GM12878 (cell line): ENCODE measurements at regions of chr6 and their contacts with region 1.

Region 1: GRCh38 chr6:129598244-129599187 is 111.5 kb downstream of the ARHGAP18 start:
- DNase-seq: peak; percentile 76
- ATAC-seq: peak; percentile 88
- H3K4me3 ChIP-seq: no peak overlapping the region
- H3K27ac ChIP-seq: peak overlapping the region; percentile 16
- H3K4me1 ChIP-seq: peaks cover 11% of the 10 kb centered on the region
- H3K27me3 ChIP-seq: no peaks in the 10 kb centered on the region
- CTCF ChIP-seq: peak; percentile 59 to 90 (median 78)
- EP300 ChIP-seq: no peak
- POLR2A ChIP-seq: no peak
- RAD21 ChIP-seq: peak; percentile 99

Region 2: DNA sequence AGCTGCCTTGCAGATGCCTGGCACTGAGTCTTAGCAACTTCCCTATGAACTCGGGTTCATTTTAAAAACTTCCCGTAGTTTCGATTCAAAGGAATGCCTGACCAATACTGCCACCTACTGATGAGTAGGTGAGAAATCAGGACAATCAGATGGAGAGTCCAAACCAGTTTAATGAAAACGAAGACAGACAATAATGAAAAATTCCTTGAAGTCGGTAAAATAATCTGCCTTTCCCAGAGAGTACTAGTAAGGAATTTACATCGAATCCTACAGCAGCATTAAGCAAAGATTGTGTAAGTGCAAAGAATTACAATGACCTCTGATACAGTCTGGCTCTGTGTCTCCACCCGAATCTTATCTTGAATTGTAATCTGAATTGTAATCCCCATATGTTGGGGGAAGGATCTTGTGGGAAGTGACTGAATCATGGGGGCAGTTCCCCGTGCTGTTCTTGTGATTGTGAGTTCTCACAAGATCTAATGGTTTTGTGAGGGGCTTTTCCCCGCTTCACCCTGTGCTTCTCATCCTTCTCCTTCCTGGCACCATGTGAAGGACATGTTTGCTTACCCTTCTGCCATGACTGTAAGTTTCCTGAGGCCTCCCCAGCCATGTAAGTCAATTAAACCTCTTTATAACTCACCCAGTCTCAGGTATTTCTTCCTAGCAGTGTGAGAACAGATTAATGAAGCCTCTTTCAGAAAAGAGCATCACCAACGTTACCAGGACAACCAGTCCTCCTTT is 23.0 kb before region 1 on chr6:
- CTCF ChIA-PET with region 1: interaction called, 9 read pairs
- POLR2A ChIA-PET with region 1: no interaction called
- RAD21 ChIA-PET with region 1: no interaction called
- SMC1A ChIA-PET with region 1: interaction called, 11 read pairs
- in situ Hi-C with region 1: no loop called
- intact Hi-C with region 1: no loop called
- DNase-seq: no peak
- ATAC-seq: no peak
- H3K4me3 ChIP-seq: no peak overlapping the region
- H3K27ac ChIP-seq: no peak overlapping the region
- H3K4me1 ChIP-seq: no peaks in the 10 kb centered on the region
- H3K27me3 ChIP-seq: no peaks in the 10 kb centered on the region
- CTCF ChIP-seq: peak in 2 of 3 experiments; percentile 11 to 33; a peak in 2 of 6 replicates
- EP300 ChIP-seq: no peak
- POLR2A ChIP-seq: no peak
- RAD21 ChIP-seq: peak; percentile 43; the same call in 1 of the 2 replicates

Region 3: GRCh38 chr6:129635396-129636130 is 37.0 kb after region 1 on chr6:
- CTCF ChIA-PET with region 1: interaction called, 12 read pairs
- POLR2A ChIA-PET with region 1: no interaction called
- RAD21 ChIA-PET with region 1: interaction called, 5 read pairs
- SMC1A ChIA-PET with region 1: interaction called, 8 read pairs
- in situ Hi-C with region 1: no loop called
- intact Hi-C with region 1: no loop called
- DNase-seq: no peak
- ATAC-seq: no peak
- H3K4me3 ChIP-seq: no peak overlapping the region
- H3K27ac ChIP-seq: no peak overlapping the region
- H3K4me1 ChIP-seq: peaks cover 16% of the 10 kb centered on the region; the same call in 1 of the 2 replicates
- H3K27me3 ChIP-seq: no peaks in the 10 kb centered on the region
- CTCF ChIP-seq: no peak
- EP300 ChIP-seq: no peak
- POLR2A ChIP-seq: no peak
- RAD21 ChIP-seq: no peak

Region 4: DNA sequence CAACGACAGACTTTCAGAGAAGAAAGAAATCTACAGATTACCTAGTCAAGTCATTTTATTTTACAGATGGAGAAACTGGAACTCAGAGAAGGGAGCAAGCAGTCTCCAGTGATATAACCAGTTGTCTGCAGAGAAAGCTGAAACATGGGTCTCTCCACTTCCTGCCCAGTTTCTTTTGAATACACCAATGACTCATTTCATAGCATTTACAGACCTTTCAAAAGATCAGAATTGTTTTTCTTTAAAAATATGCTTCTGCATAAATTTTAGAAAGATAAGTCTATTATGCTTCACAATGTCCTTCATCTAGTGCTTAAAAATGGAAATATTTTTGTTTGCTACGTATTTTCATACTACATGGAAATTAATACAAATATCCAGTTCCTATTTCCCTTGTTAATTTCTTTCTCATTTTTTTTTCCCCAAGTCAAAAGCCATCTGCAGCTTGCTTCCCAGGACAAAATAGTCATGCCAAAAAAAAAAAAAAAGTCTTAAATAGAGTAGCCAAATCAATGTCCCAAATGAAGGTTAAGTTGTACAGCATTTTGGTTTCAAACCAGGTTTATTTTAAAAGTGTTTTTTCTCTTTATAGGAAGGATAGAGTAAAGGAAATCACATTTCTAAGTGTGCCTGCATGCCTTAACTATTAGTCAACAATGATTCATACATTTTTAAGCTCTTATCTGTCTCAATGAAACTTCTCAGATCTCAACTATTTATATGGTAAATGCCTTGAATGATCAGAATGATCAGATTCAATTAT is 74.5 kb after region 1 on chr6:
- CTCF ChIA-PET with region 1: interaction called, 41 read pairs
- POLR2A ChIA-PET with region 1: interaction called, 4 read pairs
- RAD21 ChIA-PET with region 1: interaction called, 22 read pairs
- SMC1A ChIA-PET with region 1: interaction called, 21 read pairs
- in situ Hi-C with region 1: no loop called
- intact Hi-C with region 1: loop called (anchors 2 kb)
- DNase-seq: peak; percentile 60
- ATAC-seq: peak; percentile 82
- H3K4me3 ChIP-seq: peak overlapping the region; percentile 58; the same call in 1 of the 2 replicates
- H3K27ac ChIP-seq: peak overlapping the region; percentile 98
- H3K4me1 ChIP-seq: peaks cover 53% of the 10 kb centered on the region
- H3K27me3 ChIP-seq: no peaks in the 10 kb centered on the region
- CTCF ChIP-seq: no peak
- EP300 ChIP-seq: 0 out of 4 replicates have a peak, but pooled peaks of 1 of the 2 experiments have one; percentile 43
- POLR2A ChIP-seq: no peak
- RAD21 ChIP-seq: no peak

Region 5: DNA sequence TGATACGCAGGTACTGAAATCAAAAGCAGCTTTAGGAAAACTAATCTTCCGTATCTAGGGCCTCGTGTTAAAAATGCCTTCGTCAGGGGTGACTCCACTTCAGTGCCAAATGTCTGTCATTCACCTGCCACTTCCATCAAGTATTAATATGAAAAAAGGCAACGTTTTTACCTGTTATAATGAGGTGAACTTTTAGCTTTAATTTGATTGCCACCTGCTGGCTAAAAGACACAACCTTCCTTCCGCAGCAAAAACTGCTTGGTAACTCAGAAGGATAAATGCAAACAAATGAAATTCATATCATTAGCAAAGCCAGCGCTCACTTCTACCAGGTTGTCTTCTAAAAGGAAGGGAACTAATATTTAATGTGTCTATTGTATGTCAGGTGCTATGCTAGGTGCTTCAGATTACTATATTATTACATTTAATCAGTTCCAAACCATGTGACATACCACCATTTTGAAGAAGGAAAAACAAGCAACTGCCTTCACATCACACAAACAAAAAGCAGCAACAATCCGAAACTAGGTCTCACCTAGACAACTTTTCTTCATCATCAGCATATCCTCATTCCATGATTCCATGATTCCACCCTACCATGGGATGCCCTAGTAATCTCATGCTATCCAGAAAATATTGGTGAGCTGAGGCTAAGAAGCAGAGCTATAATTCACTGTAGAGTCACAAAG is 132.1 kb after region 1 on chr6:
- CTCF ChIA-PET with region 1: interaction called, 411 read pairs
- POLR2A ChIA-PET with region 1: interaction called, 10 read pairs
- RAD21 ChIA-PET with region 1: interaction called, 268 read pairs
- SMC1A ChIA-PET with region 1: interaction called, 407 read pairs
- in situ Hi-C with region 1: no loop called
- intact Hi-C with region 1: loop called (anchors 1 kb)
- DNase-seq: no peak
- ATAC-seq: peak; percentile 87
- H3K4me3 ChIP-seq: no peak overlapping the region
- H3K27ac ChIP-seq: peak overlapping the region; percentile 43; the same call in 1 of the 2 replicates
- H3K4me1 ChIP-seq: no peaks in the 10 kb centered on the region
- H3K27me3 ChIP-seq: no peaks in the 10 kb centered on the region
- CTCF ChIP-seq: peak; percentile 57 to 70 (median 65)
- EP300 ChIP-seq: no peak
- POLR2A ChIP-seq: no peak
- RAD21 ChIP-seq: peak; percentile 96

Region 6: DNA sequence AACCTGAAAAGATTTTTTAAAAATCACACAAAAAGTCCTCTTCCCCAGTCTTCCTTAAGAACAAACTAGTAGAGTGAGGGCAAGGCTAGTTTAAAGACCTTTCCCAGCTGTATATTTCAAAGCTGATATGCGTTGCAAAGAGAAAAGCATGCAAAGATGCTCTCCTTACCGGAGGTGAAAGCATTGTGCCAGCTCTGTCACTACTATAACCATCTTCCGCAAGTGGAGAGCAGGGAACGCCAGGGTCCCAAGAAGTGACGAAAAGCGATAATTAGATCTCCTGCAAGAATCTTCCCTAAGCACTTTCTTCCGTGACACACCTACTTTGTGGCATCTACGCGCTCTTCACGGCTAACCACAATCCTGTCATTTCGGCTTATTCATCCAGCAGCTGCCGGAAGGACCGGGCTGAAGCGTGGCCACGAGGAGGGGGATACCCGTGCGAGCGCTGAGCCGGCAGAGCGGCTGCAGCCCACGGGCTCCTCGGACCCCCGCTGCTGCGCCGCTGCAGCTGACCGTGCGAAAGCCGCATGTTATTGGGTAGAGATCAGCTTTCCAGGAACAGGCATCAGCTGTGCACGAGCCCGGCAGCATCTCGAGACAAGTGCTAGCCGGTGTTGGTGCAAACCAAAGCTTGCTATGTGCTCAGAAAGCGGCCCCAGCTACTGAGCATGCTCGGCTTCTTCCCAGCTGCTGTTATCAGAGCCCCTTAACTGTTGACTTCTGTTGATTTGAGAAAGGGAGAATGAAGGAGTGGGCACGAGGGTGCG is 168.6 kb after region 1 on chr6:
- CTCF ChIA-PET with region 1: interaction called, 20 read pairs
- POLR2A ChIA-PET with region 1: no interaction called
- RAD21 ChIA-PET with region 1: interaction called, 10 read pairs
- SMC1A ChIA-PET with region 1: interaction called, 13 read pairs
- in situ Hi-C with region 1: no loop called
- intact Hi-C with region 1: no loop called
- DNase-seq: no peak
- ATAC-seq: peak; percentile 90
- H3K4me3 ChIP-seq: peak overlapping the region; percentile 59
- H3K27ac ChIP-seq: no peak overlapping the region
- H3K4me1 ChIP-seq: no peaks in the 10 kb centered on the region
- H3K27me3 ChIP-seq: no peaks in the 10 kb centered on the region
- CTCF ChIP-seq: no peak
- EP300 ChIP-seq: no peak; a peak in 1 of 4 replicates
- POLR2A ChIP-seq: no peak
- RAD21 ChIP-seq: no peak

Region 7: GRCh38 chr6:130020907-130021629 is 422.6 kb after region 1 on chr6:
- CTCF ChIA-PET with region 1: interaction called, 14 read pairs
- POLR2A ChIA-PET with region 1: no interaction called
- RAD21 ChIA-PET with region 1: interaction called, 11 read pairs
- SMC1A ChIA-PET with region 1: interaction called, 20 read pairs
- in situ Hi-C with region 1: loop called (anchors 5 kb)
- intact Hi-C with region 1: loop called (anchors 1 kb)
- DNase-seq: peak; percentile 72
- ATAC-seq: peak; percentile 82
- H3K4me3 ChIP-seq: peak overlapping the region; percentile 82
- H3K27ac ChIP-seq: no peak overlapping the region
- H3K4me1 ChIP-seq: no peaks in the 10 kb centered on the region
- H3K27me3 ChIP-seq: no peaks in the 10 kb centered on the region
- CTCF ChIP-seq: peak; percentile 80 to 94 (median 81); a peak in 5 of 6 replicates
- EP300 ChIP-seq: no peak
- POLR2A ChIP-seq: no peak
- RAD21 ChIP-seq: peak; percentile 94